ENCODE measurements at regions of chr1 and their contacts with region 1.

Region 1: GRCh38 chr1:166139735-166140134 is 27.1 kb downstream of the FAM78B start:
- DNase-seq: no peak
- H3K4me3 ChIP-seq: no peak overlapping the region
- H3K27ac ChIP-seq: no peak overlapping the region
- H3K4me1 ChIP-seq: no peaks in the 10 kb centered on the region
- H3K27me3 ChIP-seq: no peaks in the 10 kb centered on the region
- CTCF ChIP-seq: no peak

Region 2: DNA sequence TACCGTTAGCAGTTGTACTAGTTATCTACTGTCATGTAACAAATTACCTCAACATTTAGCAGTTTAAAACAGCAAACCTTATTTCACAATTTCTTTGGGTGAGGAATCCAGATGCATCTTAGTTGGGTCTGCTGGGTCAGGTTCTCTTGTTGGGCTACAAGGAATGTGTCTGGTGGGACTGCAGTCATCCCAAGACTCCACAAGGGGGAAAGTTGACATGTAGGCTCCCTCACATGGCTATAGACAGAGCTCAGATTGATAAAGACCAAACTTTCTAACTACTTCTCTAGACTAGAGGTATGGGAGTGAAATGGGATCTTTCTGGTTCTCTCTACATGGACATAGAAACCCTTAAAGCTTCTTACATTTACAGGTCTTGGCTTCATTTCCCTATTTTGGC is 151.5 kb before region 1 on chr1:
- intact Hi-C with region 1: no loop called
- DNase-seq: no peak
- H3K4me3 ChIP-seq: no peak overlapping the region
- H3K27ac ChIP-seq: no peak overlapping the region
- H3K4me1 ChIP-seq: no peaks in the 10 kb centered on the region
- H3K27me3 ChIP-seq: no peaks in the 10 kb centered on the region
- CTCF ChIP-seq: no peak

Region 3: GRCh38 chr1:166479052-166479631 is 339.4 kb after region 1 on chr1:
- intact Hi-C with region 1: loop called (anchors 2 kb)
- DNase-seq: peak; percentile 60
- H3K4me3 ChIP-seq: no peak overlapping the region
- H3K27ac ChIP-seq: no peak overlapping the region
- H3K4me1 ChIP-seq: no peaks in the 10 kb centered on the region
- H3K27me3 ChIP-seq: no peaks in the 10 kb centered on the region
- CTCF ChIP-seq: peak; percentile 82

Measured in colonic mucosa (tissue), 4 donors.